ENCODE measurements at regions of chr9 and their contacts with region 1.

Region 1: GRCh38 chr9:97632985-97633858 is at the starts of genes NCBP1 and TSTD2:
- DNase-seq: peak; percentile 95
- H3K4me3 Mint-ChIP-seq: peak within 1 kb of the TSS; percentile 94
- H3K27ac Mint-ChIP-seq: peak within 1 kb of the TSS; percentile 99
- H3K4me1 Mint-ChIP-seq: peaks cover 48% of the 10 kb centered on the region
- H3K27me3 Mint-ChIP-seq: no peaks in the 10 kb centered on the region
- total RNA-seq, gene NCBP1: 43.2 and 50.5 TPM in 2 replicates
- total RNA-seq, gene TSTD2: 16.4 and 19.2 TPM in 2 replicates

Region 2: GRCh38 chr9:97411789-97412625 is 221.2 kb before region 1 on chr9 and contains the start of gene TDRD7:
- intact Hi-C with region 1: loop called (anchors 1 kb)
- DNase-seq: peak; percentile 87
- H3K4me3 Mint-ChIP-seq: peak within 1 kb of the TSS; percentile 84
- H3K27ac Mint-ChIP-seq: peak within 1 kb of the TSS; percentile 61
- H3K4me1 Mint-ChIP-seq: peaks cover 35% of the 10 kb centered on the region
- H3K27me3 Mint-ChIP-seq: peaks cover 34% of the 10 kb centered on the region
- total RNA-seq, gene TDRD7: 4.7 TPM in 2 replicates

Region 3: DNA sequence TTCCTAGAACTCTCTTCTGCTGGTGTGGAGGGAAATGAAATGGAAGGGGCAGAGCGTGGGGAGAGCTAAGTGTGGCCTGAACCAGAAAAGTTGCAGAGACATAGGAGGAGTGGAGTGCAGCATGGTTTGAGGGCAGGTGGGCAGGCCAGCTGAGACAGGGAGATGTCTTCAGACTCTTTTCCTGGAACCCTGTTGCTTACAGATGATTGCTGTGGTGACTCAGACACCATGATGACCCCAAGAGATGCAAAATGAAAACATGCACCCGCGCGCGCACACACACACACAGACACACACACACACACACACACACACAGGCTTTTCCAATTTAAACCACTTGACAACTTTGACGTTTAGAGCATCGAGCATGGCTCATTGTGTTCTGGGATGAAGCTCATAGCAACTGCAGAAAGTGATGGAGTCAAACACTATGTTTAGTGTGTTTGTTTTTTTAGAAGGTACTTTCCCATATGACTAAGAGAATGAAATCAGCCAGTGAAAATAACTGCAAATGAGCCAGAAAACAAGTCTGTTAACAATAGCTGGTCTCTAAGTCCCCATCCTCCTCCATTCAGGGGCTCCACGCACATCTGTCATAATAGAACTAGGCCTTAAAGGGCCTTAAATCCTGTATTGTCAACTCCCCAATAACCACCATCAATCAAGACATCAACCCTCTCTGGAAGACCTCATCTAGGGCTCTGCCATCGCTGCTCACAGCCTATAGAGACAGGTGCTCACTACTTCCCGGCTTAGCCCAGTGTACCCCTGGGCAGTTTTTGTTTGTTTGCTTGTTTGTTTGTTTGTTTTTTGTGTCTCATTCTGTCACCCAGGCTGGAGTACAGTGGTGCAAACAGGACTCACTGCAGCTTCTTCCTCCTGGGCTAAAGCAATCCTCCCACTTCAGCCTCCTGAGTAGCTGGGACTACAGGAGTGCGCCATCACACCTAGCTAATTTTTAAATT is 122.1 kb before region 1 on chr9:
- intact Hi-C with region 1: no loop called
- DNase-seq: peak; percentile 18
- H3K4me3 Mint-ChIP-seq: peak overlapping the region; percentile 1
- H3K27ac Mint-ChIP-seq: peak overlapping the region; percentile 77
- H3K4me1 Mint-ChIP-seq: peaks cover 18% of the 10 kb centered on the region
- H3K27me3 Mint-ChIP-seq: no peaks in the 10 kb centered on the region

Region 4: DNA sequence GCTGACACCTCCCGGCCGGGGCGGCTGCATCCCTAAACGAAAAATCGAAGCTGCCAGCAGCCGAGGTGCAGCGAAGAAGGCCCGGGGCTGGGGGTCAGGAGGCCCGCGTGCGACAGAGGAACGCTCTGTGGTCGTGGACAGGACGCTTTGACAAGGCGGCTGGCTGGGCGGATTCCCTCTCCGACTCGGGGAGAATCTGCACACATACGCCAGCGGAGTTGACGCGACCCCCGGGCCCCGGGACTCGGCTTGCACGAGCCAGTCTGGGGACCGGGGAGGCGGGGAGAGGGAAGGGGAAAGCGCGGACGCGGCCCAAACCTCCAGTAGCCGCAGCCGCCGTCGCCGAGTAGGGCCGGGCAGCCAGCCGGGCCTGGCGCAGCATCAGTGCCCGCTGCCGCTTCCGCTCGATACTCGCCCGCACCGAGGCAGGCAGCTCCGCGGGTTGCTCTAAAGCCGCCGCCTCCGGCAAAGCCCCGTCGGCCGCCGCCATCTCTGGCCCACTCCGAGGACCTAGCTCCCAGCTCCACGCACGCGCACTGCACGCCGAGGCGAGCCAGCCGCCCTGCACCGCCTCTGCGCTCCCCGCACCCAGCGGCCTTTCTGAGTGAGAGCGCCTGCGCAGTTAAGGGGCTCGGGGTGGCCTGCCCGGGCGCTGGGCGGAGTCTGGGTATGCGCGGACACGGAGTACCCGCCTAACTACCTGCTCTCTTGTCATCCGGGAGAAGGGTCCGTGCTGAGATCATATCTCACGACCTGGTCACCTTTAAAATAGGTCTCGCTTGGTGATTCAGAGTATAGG is 63.8 kb after region 1 on chr9 and contains the start of gene XPA:
- intact Hi-C with region 1: loop called (anchors 1 kb)
- DNase-seq: peak; percentile 98
- H3K4me3 Mint-ChIP-seq: peak within 1 kb of the TSS; percentile 85
- H3K27ac Mint-ChIP-seq: peak within 1 kb of the TSS; percentile 84
- H3K4me1 Mint-ChIP-seq: peaks cover 54% of the 10 kb centered on the region
- H3K27me3 Mint-ChIP-seq: no peaks in the 10 kb centered on the region
- total RNA-seq, gene XPA: 10.6 and 11.3 TPM in 2 replicates

Region 5: GRCh38 chr9:97848582-97849237 is 215.5 kb after region 1 on chr9:
- intact Hi-C with region 1: no loop called
- DNase-seq: no peak
- H3K4me3 Mint-ChIP-seq: peak overlapping the region; percentile 73
- H3K27ac Mint-ChIP-seq: no peak overlapping the region
- H3K4me1 Mint-ChIP-seq: peaks cover 15% of the 10 kb centered on the region
- H3K27me3 Mint-ChIP-seq: peaks cover 82% of the 10 kb centered on the region

Region 6: GRCh38 chr9:97982683-97983588 is 349.7 kb after region 1 on chr9 and contains the start of gene ANP32B:
- intact Hi-C with region 1: loop called (anchors 1 kb)
- DNase-seq: peak; percentile 93
- H3K4me3 Mint-ChIP-seq: peak within 1 kb of the TSS; percentile 80
- H3K27ac Mint-ChIP-seq: peak within 1 kb of the TSS; percentile 78
- H3K4me1 Mint-ChIP-seq: peaks cover 46% of the 10 kb centered on the region
- H3K27me3 Mint-ChIP-seq: no peaks in the 10 kb centered on the region
- total RNA-seq, gene ANP32B: 305 and 313 TPM in 2 replicates

Region 7: DNA sequence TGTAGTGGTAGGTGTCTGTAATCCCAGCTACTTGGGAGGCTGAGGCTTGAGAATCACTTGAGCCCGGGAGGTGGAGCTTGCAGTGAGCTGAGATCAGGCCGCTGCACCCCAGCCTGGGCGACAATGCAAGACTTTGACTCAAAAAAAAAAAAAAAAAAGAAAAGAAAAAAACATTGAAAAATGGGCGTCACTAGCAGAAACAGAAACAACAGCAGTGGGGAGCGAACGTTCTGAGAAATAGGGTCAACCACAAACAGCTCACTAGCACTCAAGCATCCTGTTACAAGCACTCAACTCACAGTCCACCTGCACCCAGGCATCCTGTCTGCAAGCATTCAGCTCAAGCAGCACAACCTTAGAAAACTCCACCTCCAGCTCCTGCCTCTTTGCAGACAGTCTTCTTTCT is 468.6 kb after region 1 on chr9:
- intact Hi-C with region 1: loop called (anchors 10 kb)
- DNase-seq: peak; percentile 83
- H3K4me3 Mint-ChIP-seq: peak overlapping the region; percentile 69
- H3K27ac Mint-ChIP-seq: peak overlapping the region; percentile 88
- H3K4me1 Mint-ChIP-seq: peaks cover 85% of the 10 kb centered on the region
- H3K27me3 Mint-ChIP-seq: no peaks in the 10 kb centered on the region